WTC11 (cell line): ENCODE measurements at regions of chr3 and their contacts with region 1.

Region 1: GRCh38 chr3:156674046-156674910 is at the start of gene TIPARP:
- DNase-seq: peak; percentile 92
- ATAC-seq: peak; percentile 85
- H3K4me3 Mint-ChIP-seq: peak within 1 kb of the TSS; percentile 91
- H3K27ac Mint-ChIP-seq: peak within 1 kb of the TSS; percentile 99
- H3K4me1 Mint-ChIP-seq: peaks cover 21% of the 10 kb centered on the region
- H3K27me3 Mint-ChIP-seq: peaks cover 7% of the 10 kb centered on the region; the same call in 1 of the 2 replicates
- CTCF ChIP-seq: no peak; the same call in 1 of the 2 replicates
- total RNA-seq, gene TIPARP: 5.0 to 5.6 TPM (median 5.1 TPM) in 3 replicates

Region 2: GRCh38 chr3:156554842-156555687 is 119.2 kb before region 1 on chr3 and contains the start of gene SSR3:
- CTCF ChIA-PET with region 1: interaction called, 18 read pairs
- POLR2A ChIA-PET with region 1: interaction called, 12 read pairs
- DNase-seq: peak; percentile 98
- ATAC-seq: peak; percentile 100
- H3K4me3 Mint-ChIP-seq: peak within 1 kb of the TSS; percentile 95
- H3K27ac Mint-ChIP-seq: peak within 1 kb of the TSS; percentile 95
- H3K4me1 Mint-ChIP-seq: peaks cover 20% of the 10 kb centered on the region
- H3K27me3 Mint-ChIP-seq: no peaks in the 10 kb centered on the region
- CTCF ChIP-seq: no peak
- total RNA-seq, gene SSR3: 147 to 162 TPM (median 160 TPM) in 3 replicates

Region 3: DNA sequence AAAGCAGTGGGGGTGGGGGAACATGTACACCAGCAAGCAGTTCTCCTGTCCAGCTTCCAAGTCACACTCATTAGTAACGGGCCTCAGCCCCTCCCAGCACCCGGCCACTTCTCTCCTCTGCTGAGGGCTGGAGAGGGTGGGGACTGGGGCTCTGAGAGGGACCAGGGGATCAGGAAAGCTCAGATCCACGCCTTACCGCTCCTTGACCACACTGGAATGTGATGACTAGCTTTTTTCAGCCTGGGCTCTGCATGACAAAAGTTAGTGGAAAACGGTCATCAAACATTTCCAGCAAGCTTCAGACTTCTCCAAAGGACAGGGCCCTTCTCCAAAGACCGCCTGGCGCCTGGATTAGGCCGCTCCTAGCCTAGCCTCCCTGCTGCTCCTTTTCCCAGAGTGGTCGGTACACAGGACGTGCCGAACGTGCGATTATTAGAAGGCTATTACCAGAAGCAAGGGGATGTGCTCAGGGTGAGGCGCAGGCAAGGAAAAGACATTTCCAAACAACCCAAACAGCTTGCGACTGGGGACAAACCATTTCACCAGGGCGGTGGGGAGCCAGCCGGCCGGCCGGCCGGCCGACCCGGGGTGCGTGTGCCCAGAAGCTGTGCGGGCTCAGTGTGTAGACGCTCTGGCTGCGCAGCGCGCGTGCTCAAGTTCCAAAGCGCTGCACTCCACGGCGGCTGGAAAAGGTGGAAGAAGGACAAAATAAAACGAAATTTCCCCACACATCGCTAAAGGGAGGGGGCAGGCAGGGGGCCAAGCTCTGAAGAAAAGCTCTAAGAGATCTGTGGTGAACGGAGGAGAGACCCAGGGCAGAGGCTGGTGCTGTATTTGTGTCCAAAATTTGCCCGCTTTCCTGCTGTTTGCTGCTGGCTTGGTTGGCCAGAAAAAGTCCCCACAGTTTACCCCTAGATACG is 68.3 kb before region 1 on chr3:
- CTCF ChIA-PET with region 1: interaction called, 12 read pairs
- POLR2A ChIA-PET with region 1: no interaction called
- DNase-seq: peak; percentile 38
- ATAC-seq: peak; percentile 92
- H3K4me3 Mint-ChIP-seq: peak overlapping the region; percentile 80
- H3K27ac Mint-ChIP-seq: peak overlapping the region; percentile 86
- H3K4me1 Mint-ChIP-seq: peaks cover 29% of the 10 kb centered on the region
- H3K27me3 Mint-ChIP-seq: peaks cover 8% of the 10 kb centered on the region
- CTCF ChIP-seq: no peak

Region 4: GRCh38 chr3:156664011-156664830 is 10.1 kb before region 1 on chr3:
- CTCF ChIA-PET with region 1: no interaction called
- POLR2A ChIA-PET with region 1: no interaction called
- DNase-seq: no peak
- ATAC-seq: no peak
- H3K4me3 Mint-ChIP-seq: no peak overlapping the region
- H3K27ac Mint-ChIP-seq: no peak overlapping the region
- H3K4me1 Mint-ChIP-seq: peaks cover 17% of the 10 kb centered on the region
- H3K27me3 Mint-ChIP-seq: no peaks in the 10 kb centered on the region
- CTCF ChIP-seq: no peak

Region 5: DNA sequence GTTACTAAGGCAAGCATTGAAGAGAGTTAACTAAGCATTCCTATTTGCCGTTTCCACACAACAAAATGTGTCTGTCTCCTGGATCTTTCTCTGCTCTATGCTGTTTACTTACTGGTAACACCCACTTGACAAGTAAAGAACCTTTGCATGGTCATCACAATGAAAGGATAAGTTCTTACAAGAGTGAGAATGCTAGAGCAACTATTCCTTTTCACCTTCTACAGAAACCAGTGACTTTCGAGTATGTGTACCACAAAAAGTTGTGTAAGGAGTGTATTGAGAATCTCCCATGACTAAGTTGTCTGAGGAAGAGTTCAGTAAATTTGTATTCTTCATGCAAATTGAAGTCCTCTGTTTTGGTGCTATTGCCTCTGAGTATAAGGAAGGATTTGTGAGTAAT is 10.9 kb after region 1 on chr3:
- CTCF ChIA-PET with region 1: interaction called, 12 read pairs
- POLR2A ChIA-PET with region 1: no interaction called
- DNase-seq: no peak
- ATAC-seq: no peak
- H3K4me3 Mint-ChIP-seq: no peak overlapping the region
- H3K27ac Mint-ChIP-seq: no peak overlapping the region
- H3K4me1 Mint-ChIP-seq: peaks cover 27% of the 10 kb centered on the region
- H3K27me3 Mint-ChIP-seq: no peaks in the 10 kb centered on the region
- CTCF ChIP-seq: no peak

Region 6: DNA sequence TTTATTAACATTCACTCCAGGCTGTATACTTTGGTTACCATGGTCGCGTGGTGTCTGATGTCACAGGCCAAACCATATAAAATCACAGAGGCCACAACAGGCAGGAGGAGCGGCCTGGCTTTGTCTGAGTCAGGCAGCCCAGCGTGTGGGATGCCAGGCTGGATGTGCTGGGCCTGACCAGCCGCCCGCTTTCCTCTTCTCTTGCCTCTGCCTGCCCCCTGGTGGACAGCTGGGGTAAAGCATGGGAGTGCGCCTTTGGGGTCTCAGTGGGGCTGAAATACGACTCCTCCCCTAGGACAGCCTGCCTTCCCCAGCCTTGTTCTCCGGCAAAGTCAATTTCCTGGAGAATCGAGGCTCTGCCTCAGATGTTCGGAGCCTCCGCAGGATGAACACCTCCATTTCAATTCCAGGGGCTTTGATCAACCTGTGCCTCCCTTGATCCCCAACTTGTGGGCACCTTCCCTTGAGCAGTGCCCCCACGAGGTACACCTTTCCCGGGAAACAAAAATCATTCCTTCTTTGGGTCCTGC is 407.5 kb after region 1 on chr3:
- CTCF ChIA-PET with region 1: interaction called, 15 read pairs
- POLR2A ChIA-PET with region 1: interaction called, 3 read pairs
- DNase-seq: peak; percentile 99
- ATAC-seq: peak; percentile 96
- H3K4me3 Mint-ChIP-seq: peak overlapping the region; percentile 32; the same call in 1 of the 2 replicates
- H3K27ac Mint-ChIP-seq: 0 out of 2 replicates have a peak overlapping the region, but pooled peaks have one; percentile 8
- H3K4me1 Mint-ChIP-seq: peaks cover 19% of the 10 kb centered on the region
- H3K27me3 Mint-ChIP-seq: peaks cover 7% of the 10 kb centered on the region
- CTCF ChIP-seq: peak; percentile 99

Region 7: GRCh38 chr3:157088601-157089454 is 414.6 kb after region 1 on chr3:
- CTCF ChIA-PET with region 1: interaction called, 12 read pairs
- POLR2A ChIA-PET with region 1: interaction called, 4 read pairs
- DNase-seq: peak; percentile 94
- ATAC-seq: peak; percentile 91
- H3K4me3 Mint-ChIP-seq: peak overlapping the region; percentile 64
- H3K27ac Mint-ChIP-seq: peak overlapping the region; percentile 92
- H3K4me1 Mint-ChIP-seq: peaks cover 43% of the 10 kb centered on the region
- H3K27me3 Mint-ChIP-seq: peaks cover 14% of the 10 kb centered on the region
- CTCF ChIP-seq: no peak

Region 8: GRCh38 chr3:157130467-157131251 is 456.4 kb after region 1 on chr3:
- CTCF ChIA-PET with region 1: interaction called, 10 read pairs
- POLR2A ChIA-PET with region 1: interaction called, 3 read pairs
- DNase-seq: peak; percentile 75
- ATAC-seq: peak; percentile 63
- H3K4me3 Mint-ChIP-seq: peak overlapping the region; percentile 53
- H3K27ac Mint-ChIP-seq: peak overlapping the region; percentile 67; the same call in 1 of the 2 replicates
- H3K4me1 Mint-ChIP-seq: peaks cover 26% of the 10 kb centered on the region
- H3K27me3 Mint-ChIP-seq: no peaks in the 10 kb centered on the region; the same call in 1 of the 2 replicates
- CTCF ChIP-seq: peak; percentile 69